ENCODE measurements at regions of chr7 and their contacts with region 1.

Region 1: GRCh38 chr7:20778063-20778721 is 8.5 kb downstream of the SP8 start:
- DNase-seq: peak in 4 of 6 donors; percentile 52 to 86 (median 70)
- ATAC-seq: peak; percentile 96 to 100 (median 100)
- H3K4me3 ChIP-seq: peak overlapping the region in 2 of 4 donors; percentile 21 to 44
- H3K27ac ChIP-seq: no peak overlapping the region
- H3K4me1 ChIP-seq: no peaks in the 10 kb centered on the region
- H3K27me3 ChIP-seq: peaks cover 11 to 88% (median 37%) of the 10 kb centered on the region in 4 donors
- CTCF ChIP-seq: peak in 3 of 4 donors; percentile 48 to 75 (median 62)

Region 2: GRCh38 chr7:20713792-20714191 is 64.4 kb before region 1 on chr7:
- intact Hi-C with region 1: no loop called
- DNase-seq: no peak
- ATAC-seq: no peak
- H3K4me3 ChIP-seq: no peak overlapping the region
- H3K27ac ChIP-seq: no peak overlapping the region
- H3K4me1 ChIP-seq: no peaks in the 10 kb centered on the region
- H3K27me3 ChIP-seq: no peaks in the 10 kb centered on the region
- CTCF ChIP-seq: no peak

Region 3: GRCh38 chr7:20849401-20849800 is 71.2 kb after region 1 on chr7:
- intact Hi-C with region 1: no loop called
- DNase-seq: no peak
- ATAC-seq: no peak
- H3K4me3 ChIP-seq: no peak overlapping the region
- H3K27ac ChIP-seq: no peak overlapping the region
- H3K4me1 ChIP-seq: no peaks in the 10 kb centered on the region
- H3K27me3 ChIP-seq: peaks cover 0 to 8% (median 0%) of the 10 kb centered on the region in 4 donors
- CTCF ChIP-seq: no peak

Region 4: GRCh38 chr7:21253740-21254687 is 475.8 kb after region 1 on chr7:
- intact Hi-C with region 1: loop called in 2 of 3 experiments (anchors 5 to 10 kb)
- DNase-seq: peak; percentile 37 to 73 (median 58)
- ATAC-seq: peak; percentile 85 to 98 (median 94)
- H3K4me3 ChIP-seq: no peak overlapping the region
- H3K27ac ChIP-seq: no peak overlapping the region
- H3K4me1 ChIP-seq: no peaks in the 10 kb centered on the region
- H3K27me3 ChIP-seq: peaks cover 3 to 61% (median 17%) of the 10 kb centered on the region in 4 donors
- CTCF ChIP-seq: peak in 3 of 4 donors; percentile 26 to 49 (median 41)

Region 5: GRCh38 chr7:21507626-21508343 is 729.6 kb after region 1 on chr7:
- intact Hi-C with region 1: loop called in 1 of 3 experiments (anchors 10 kb)
- DNase-seq: peak in 3 of 6 donors; percentile 21 to 60 (median 29)
- ATAC-seq: peak; percentile 60 to 88 (median 84)
- H3K4me3 ChIP-seq: no peak overlapping the region
- H3K27ac ChIP-seq: no peak overlapping the region
- H3K4me1 ChIP-seq: no peaks in the 10 kb centered on the region
- H3K27me3 ChIP-seq: no peaks in the 10 kb centered on the region
- CTCF ChIP-seq: peak; percentile 40 to 58 (median 54)

Measured in pancreas (tissue), 10 donors.